ENCODE measurements at regions of chr1 and their contacts with region 1.

Region 1: GRCh38 chr1:153494976-153495535 is 34.6 kb upstream of the S100A7 start:
- DNase-seq: peak; percentile 50 to 72
- ATAC-seq: peak; percentile 54 to 88; a peak in 4 of 6 replicates
- H3K4me3 ChIP-seq: no peak overlapping the region
- H3K27ac ChIP-seq: peak overlapping the region in 1 of 2 experiments; percentile 32; a peak in 2 of 6 replicates
- H3K4me1 ChIP-seq: peaks cover 18% of the 10 kb centered on the region
- CTCF ChIP-seq: peak; percentile 90
- EP300 ChIP-seq: no peak
- POLR2A ChIP-seq: no peak
- RAD21 ChIP-seq: peak; percentile 93 to 94

Region 2: GRCh38 chr1:153344531-153344981 is 150.5 kb before region 1 on chr1:
- CTCF ChIA-PET with region 1: interaction called, 731 read pairs
- POLR2A ChIA-PET with region 1: no interaction called
- DNase-seq: no peak
- ATAC-seq: no peak
- H3K4me3 ChIP-seq: no peak overlapping the region
- H3K27ac ChIP-seq: no peak overlapping the region
- H3K4me1 ChIP-seq: no peaks in the 10 kb centered on the region
- CTCF ChIP-seq: no peak
- EP300 ChIP-seq: no peak
- POLR2A ChIP-seq: no peak
- RAD21 ChIP-seq: no peak

Region 3: DNA sequence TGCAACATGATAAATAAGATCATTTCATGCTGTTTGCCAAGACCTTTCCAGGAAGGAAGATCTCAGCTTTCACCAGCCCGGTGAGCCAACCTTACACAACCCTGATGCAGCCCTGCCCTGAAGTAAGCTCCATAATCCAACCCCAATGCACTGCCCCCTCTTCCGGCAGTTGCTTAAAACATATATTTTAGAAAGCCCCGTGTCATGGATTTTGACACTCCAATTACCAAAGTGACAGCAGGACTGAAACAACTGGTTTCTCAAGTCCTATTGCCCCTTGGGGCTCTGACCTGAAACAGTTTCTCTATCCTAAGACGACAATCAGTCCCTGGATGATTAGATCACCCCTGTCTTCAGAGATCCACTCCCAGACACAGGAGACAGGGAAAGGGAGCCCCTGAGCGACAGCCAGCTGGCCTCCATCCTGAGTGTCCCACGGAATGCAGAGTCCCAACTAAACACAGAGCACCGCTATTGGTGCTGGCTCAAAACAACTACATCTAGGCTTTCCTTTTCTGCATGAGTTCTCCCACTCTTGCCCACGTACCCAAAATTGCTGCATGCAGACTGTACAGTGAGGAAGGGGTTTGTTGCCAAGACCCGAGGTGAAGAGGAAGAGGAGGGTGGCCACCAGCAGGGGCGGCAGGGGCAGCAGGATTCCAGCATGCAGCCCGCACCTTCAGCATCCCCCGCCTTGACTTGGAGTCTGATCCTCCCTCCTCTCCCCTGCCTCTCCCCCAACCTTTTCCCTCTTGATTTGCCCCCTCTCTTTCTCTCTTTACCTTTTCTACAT is 129.6 kb before region 1 on chr1:
- CTCF ChIA-PET with region 1: interaction called, 731 read pairs
- POLR2A ChIA-PET with region 1: no interaction called
- DNase-seq: no peak
- ATAC-seq: no peak
- H3K4me3 ChIP-seq: no peak overlapping the region
- H3K27ac ChIP-seq: no peak overlapping the region
- H3K4me1 ChIP-seq: no peaks in the 10 kb centered on the region
- CTCF ChIP-seq: no peak
- EP300 ChIP-seq: no peak
- POLR2A ChIP-seq: no peak
- RAD21 ChIP-seq: no peak

Region 4: DNA sequence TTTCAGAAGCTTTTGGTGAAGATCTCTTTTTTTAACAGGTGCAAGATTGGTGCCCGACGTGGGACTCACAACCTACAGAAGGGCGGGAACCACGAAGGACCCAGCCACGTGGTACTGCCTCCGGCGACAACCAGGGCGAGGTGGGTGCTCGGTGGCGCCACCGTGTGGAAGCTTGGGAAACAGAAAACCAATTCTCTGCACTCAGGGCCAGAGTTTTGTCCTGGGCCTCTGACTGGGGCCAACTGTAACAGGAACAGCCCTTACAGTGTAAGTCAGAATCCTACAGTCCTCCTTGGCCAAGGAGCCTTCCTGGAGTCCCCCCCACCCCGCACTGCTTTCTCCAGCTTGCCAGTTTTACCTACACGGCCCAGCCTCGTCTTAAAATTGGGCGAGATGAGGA is 90.3 kb before region 1 on chr1:
- CTCF ChIA-PET with region 1: interaction called, 23 read pairs
- POLR2A ChIA-PET with region 1: no interaction called
- DNase-seq: peak; percentile 40 to 47
- ATAC-seq: peak in 1 of 2 experiments; percentile 83; a peak in 3 of 6 replicates
- H3K4me3 ChIP-seq: no peak overlapping the region
- H3K27ac ChIP-seq: no peak overlapping the region
- H3K4me1 ChIP-seq: no peaks in the 10 kb centered on the region
- CTCF ChIP-seq: peak; percentile 25; the same call in 1 of the 3 replicates
- EP300 ChIP-seq: no peak
- POLR2A ChIP-seq: no peak
- RAD21 ChIP-seq: peak in 1 of 2 experiments; percentile 27; a peak in 2 of 5 replicates

Region 5: DNA sequence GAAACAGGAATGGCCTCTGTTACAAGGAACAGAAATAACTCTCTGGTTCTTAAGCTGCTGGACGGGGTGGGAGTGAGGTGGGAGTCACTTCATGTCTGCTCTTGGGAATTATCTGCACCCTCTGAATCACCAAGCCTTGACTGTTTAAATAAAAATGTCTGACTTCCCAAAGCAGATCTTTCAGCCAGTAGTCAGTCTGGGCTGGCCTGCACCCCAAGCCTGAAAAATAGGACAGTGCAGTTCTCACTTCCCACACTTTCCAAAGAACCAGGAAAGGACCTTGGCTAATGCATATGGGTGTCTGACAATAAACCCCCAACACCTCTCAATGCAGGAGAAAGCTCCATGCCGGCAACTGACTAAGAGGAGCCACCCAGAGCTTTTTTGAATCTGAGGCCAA is 35.4 kb before region 1 on chr1:
- CTCF ChIA-PET with region 1: interaction called, 128 read pairs
- POLR2A ChIA-PET with region 1: no interaction called
- DNase-seq: no peak
- ATAC-seq: no peak
- H3K4me3 ChIP-seq: no peak overlapping the region
- H3K27ac ChIP-seq: no peak overlapping the region
- H3K4me1 ChIP-seq: no peaks in the 10 kb centered on the region
- CTCF ChIP-seq: no peak
- EP300 ChIP-seq: no peak
- POLR2A ChIP-seq: no peak
- RAD21 ChIP-seq: no peak

Region 6: DNA sequence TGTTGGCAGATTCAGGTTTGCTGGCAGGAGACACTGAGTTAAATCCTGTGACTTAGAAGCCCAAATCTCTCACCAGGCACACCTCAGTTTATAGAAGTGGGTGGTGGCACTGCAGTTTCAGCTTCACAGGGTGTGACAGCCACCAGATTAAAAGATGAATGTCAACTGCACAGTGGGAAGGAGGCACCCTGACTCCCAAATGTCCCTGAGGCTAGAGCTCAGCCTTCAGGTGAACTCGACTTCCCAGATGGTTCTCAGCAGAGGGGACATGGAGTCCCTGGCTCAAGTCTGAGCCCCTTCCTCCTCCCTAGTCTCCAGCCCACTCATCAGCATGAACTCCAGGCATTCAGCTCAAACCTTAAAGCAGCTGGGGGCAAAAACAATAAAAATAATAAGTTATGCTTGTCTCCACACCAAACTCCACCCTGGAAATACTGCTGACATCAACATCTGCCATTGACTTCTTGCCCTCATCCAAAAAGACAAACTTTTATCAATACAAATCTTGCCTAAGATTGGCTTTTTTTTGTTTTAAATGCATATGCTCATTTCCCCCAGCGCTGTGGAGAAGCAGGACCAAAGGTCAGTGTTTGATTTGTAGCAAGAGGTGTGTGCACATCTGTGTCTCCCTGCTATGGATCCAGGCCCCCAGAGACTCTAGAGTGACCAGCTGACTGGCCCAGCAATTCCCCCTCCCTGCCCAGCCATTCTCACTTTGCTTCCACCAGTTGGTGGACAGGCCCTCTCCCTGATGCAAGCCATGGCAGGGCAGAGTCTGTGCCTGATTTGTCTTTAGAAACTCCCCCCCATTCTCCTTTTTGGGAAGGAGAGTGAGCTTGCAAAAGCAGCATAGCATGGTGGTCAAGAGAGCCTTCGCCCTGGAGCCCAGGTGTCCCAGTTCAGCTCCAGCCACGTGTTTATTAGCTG is 16.1 kb before region 1 on chr1:
- CTCF ChIA-PET with region 1: interaction called, 36 read pairs
- POLR2A ChIA-PET with region 1: no interaction called
- DNase-seq: no peak
- ATAC-seq: no peak; a peak in 1 of 6 replicates
- H3K4me3 ChIP-seq: no peak overlapping the region
- H3K27ac ChIP-seq: no peak overlapping the region
- H3K4me1 ChIP-seq: peaks cover 16% of the 10 kb centered on the region
- CTCF ChIP-seq: no peak
- EP300 ChIP-seq: no peak
- POLR2A ChIP-seq: no peak
- RAD21 ChIP-seq: no peak

Region 7: GRCh38 chr1:153566440-153567379 is 71.7 kb after region 1 on chr1:
- CTCF ChIA-PET with region 1: interaction called, 16 read pairs
- POLR2A ChIA-PET with region 1: no interaction called
- DNase-seq: peak; percentile 99
- ATAC-seq: peak; percentile 82 to 89
- H3K4me3 ChIP-seq: peak overlapping the region; percentile 15; the same call in 1 of the 3 replicates
- H3K27ac ChIP-seq: peak overlapping the region; percentile 97 to 100
- H3K4me1 ChIP-seq: peaks cover 57% of the 10 kb centered on the region
- CTCF ChIP-seq: no peak
- EP300 ChIP-seq: peak; percentile 75 to 85; a peak in 3 of 5 replicates
- POLR2A ChIP-seq: no peak
- RAD21 ChIP-seq: peak; percentile 30 to 58; a peak in 4 of 5 replicates